Mammary epithelial cell (primary cell): ENCODE measurements at regions of chr13 and their contacts with region 1.

Region 1: GRCh38 chr13:77555246-77555645 is 19.7 kb downstream of the SCEL start:
- DNase-seq: no peak
- H3K4me3 ChIP-seq: no peak overlapping the region
- H3K27ac ChIP-seq: no peak overlapping the region
- H3K4me1 ChIP-seq: peaks cover 9% of the 10 kb centered on the region
- H3K27me3 ChIP-seq: peaks cover 6% of the 10 kb centered on the region
- CTCF ChIP-seq: no peak

Region 2: DNA sequence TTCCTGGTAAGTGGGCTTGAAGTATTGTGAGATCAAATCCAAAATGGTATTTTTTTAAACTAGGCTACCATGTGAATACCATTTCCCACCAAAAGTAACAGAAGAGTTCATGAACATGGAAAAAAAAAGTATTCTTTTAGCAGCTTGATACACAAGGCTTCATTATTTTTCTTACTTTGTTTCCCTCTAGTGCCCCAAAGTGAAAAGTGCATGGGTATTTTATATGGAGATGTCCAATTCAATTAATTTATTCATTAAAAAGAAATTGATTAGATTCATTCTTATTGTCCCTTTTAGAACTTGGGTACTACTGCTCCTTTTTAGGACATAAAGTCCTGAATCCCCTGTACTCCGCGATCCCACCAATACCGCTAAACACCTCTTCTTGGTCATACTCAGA is 48.4 kb before region 1 on chr13:
- CTCF ChIA-PET with region 1: no interaction called
- dilution Hi-C with region 1: no loop called
- in situ Hi-C with region 1: no loop called
- intact Hi-C with region 1: loop called (anchors 5 kb)
- DNase-seq: no peak
- H3K4me3 ChIP-seq: no peak overlapping the region
- H3K27ac ChIP-seq: no peak overlapping the region
- H3K4me1 ChIP-seq: peaks cover 19% of the 10 kb centered on the region
- H3K27me3 ChIP-seq: peaks cover 26% of the 10 kb centered on the region
- CTCF ChIP-seq: peak in 1 of 2 donors; percentile 31

Region 3: DNA sequence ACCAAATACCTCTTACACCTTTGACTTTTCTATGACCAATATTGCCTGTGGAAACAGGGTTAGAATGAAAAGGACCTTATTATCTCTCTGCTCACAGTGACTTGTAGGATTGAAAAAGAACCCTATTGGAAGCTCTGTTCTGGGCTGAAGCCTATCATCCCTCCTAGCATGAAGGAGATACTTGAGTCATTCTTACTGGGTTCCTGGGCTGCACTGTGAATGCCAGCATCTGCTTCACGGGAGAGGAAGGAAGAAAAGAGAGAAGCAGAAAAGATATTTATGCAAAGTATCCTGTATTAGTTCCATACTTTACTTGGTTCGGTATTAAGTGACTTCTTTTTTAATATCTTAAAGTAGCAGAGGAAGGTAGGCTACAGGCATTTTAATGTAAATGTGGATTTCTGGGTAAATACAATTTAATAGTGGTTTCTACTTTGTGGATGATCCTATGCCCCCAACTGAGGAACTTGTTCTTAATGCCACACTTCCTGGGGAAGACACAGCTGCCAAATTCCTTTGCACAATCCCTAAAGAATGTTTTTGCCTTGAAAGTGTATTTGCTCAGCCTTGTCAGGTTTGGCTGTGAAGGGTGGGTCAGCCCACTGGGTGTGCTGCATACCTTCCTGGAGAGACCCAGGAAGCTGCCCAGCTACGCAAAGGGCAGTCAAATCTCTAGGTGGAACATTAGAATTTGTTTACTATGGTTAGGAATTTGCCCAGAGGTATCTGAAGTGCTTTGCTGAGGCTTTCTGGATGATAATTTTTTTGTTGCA is 33.5 kb before region 1 on chr13:
- CTCF ChIA-PET with region 1: no interaction called
- dilution Hi-C with region 1: no loop called
- in situ Hi-C with region 1: no loop called
- intact Hi-C with region 1: loop called (anchors 5 kb)
- DNase-seq: peak; percentile 24
- H3K4me3 ChIP-seq: no peak overlapping the region
- H3K27ac ChIP-seq: peak overlapping the region; percentile 40
- H3K4me1 ChIP-seq: peaks cover 24% of the 10 kb centered on the region
- H3K27me3 ChIP-seq: no peaks in the 10 kb centered on the region
- CTCF ChIP-seq: peak; percentile 7 to 13

Region 4: GRCh38 chr13:77620138-77620537 is 64.9 kb after region 1 on chr13:
- CTCF ChIA-PET with region 1: no interaction called
- dilution Hi-C with region 1: no loop called
- in situ Hi-C with region 1: no loop called
- intact Hi-C with region 1: no loop called
- DNase-seq: no peak
- H3K4me3 ChIP-seq: no peak overlapping the region
- H3K27ac ChIP-seq: no peak overlapping the region
- H3K4me1 ChIP-seq: no peaks in the 10 kb centered on the region
- H3K27me3 ChIP-seq: peaks cover 2% of the 10 kb centered on the region
- CTCF ChIP-seq: no peak